ENCODE measurements at regions of chr9 and their contacts with region 1.

Region 1: DNA sequence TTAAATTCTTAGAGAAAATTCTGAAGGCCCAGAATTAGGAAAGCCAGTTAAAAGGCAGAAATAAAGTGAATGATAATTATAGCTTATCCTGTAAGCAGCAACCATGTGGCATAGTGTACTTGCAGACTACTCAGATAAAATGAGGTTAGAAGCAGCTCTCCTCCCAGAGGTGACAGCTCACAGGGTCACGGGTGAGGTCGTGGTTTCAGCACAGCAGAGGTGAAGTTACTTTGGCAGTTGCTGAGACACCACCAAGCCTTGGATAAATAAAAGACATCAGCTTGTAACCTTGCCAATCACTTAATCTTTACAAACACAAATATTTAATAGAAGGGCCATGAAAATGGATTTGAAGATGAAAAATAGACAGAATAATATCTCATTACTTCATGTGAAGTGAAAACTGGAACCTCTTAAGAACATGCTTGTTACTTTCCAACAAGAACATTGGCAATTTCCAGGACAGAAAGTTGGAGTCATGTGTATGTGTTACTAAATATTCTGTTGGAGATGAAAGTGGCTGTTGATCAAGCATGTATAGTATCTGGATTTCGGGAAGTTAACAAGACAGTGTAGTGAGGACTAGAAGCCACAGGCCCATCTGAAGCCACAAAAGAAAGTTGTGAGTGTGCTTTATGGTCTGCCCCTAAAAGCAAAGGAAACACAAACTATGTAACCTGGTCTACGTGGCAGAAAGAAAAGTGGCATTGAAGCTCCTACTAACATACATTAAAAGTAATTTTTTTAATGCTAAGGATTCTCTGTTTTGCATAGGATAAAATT is 134.4 kb downstream of the ERCC6L2 start:
- DNase-seq: peak; percentile 75
- H3K4me3 Mint-ChIP-seq: peak overlapping the region; percentile 54
- H3K27ac Mint-ChIP-seq: peak overlapping the region; percentile 96
- H3K4me1 Mint-ChIP-seq: peaks cover 55% of the 10 kb centered on the region
- H3K27me3 Mint-ChIP-seq: no peaks in the 10 kb centered on the region

Region 2: DNA sequence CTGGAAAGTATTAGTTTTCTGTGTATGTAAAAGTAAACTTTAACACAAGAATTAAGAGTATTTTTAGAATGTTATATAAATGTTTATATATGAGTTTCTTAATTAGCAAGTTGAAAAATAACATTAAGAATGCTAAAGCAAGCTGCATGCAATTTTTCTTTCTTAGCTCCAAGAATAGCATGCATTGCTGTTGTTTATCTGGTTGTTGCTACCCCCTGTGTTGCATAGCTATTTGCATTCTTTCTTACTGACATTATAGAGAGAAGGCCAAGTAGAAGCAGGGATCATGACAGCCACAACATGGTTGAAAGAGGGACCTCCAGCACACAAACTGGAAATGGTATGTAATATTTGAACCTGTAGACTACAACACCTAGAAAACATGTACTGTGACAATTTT is 39.6 kb before region 1 on chr9:
- intact Hi-C with region 1: loop called (anchors 5 kb)
- DNase-seq: no peak
- H3K4me3 Mint-ChIP-seq: no peak overlapping the region
- H3K27ac Mint-ChIP-seq: no peak overlapping the region
- H3K4me1 Mint-ChIP-seq: peaks cover 15% of the 10 kb centered on the region
- H3K27me3 Mint-ChIP-seq: no peaks in the 10 kb centered on the region

Region 3: GRCh38 chr9:96021551-96022444 is 11.9 kb after region 1 on chr9:
- intact Hi-C with region 1: loop called (anchors 1 kb)
- DNase-seq: no peak
- H3K4me3 Mint-ChIP-seq: peak overlapping the region; percentile 86
- H3K27ac Mint-ChIP-seq: peak overlapping the region; percentile 93
- H3K4me1 Mint-ChIP-seq: peaks cover 60% of the 10 kb centered on the region
- H3K27me3 Mint-ChIP-seq: peaks cover 17% of the 10 kb centered on the region